Colonic mucosa (tissue), 4 donors: ENCODE measurements at regions of chr1 and their contacts with region 1.

Region 1: DNA sequence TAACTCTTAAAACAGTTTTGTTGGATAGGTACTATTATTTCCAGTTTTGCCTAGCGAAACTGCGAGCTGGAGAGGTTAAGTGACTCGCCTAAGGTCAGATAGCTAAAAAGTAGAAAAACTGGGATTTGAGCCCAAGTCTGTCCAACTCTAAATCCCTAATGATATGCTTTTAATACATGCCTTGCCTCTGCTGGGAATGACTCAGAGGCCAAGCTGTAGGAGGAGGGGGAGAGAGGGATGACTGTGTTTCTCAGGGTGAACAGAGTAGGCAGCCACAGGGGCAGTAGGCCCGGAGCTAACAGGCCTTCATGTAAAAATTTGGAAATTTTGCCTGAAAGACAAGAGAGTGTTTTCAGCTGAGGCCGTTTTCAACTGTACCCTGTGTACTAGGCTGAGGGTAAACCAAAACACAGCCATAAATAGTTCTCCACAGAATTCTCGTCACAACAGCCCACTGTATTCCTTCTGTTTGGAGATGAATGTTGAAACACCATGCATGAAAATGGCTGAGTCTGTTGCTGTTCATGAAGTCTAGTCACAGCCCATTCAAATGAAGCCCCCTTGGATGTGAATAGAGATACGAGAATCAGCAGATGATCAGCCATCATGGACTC is 107.5 kb upstream of the HOOK1 start:
- DNase-seq: no peak
- H3K4me3 ChIP-seq: no peak overlapping the region
- H3K27ac ChIP-seq: peak overlapping the region; percentile 19
- H3K4me1 ChIP-seq: no peaks in the 10 kb centered on the region
- H3K27me3 ChIP-seq: no peaks in the 10 kb centered on the region
- CTCF ChIP-seq: no peak

Region 2: GRCh38 chr1:58773406-58773840 is 933.9 kb before region 1 on chr1:
- intact Hi-C with region 1: loop called (anchors 10 kb)
- DNase-seq: peak; percentile 42
- H3K4me3 ChIP-seq: no peak overlapping the region
- H3K27ac ChIP-seq: no peak overlapping the region
- H3K4me1 ChIP-seq: no peaks in the 10 kb centered on the region
- H3K27me3 ChIP-seq: no peaks in the 10 kb centered on the region
- CTCF ChIP-seq: no peak

Region 3: DNA sequence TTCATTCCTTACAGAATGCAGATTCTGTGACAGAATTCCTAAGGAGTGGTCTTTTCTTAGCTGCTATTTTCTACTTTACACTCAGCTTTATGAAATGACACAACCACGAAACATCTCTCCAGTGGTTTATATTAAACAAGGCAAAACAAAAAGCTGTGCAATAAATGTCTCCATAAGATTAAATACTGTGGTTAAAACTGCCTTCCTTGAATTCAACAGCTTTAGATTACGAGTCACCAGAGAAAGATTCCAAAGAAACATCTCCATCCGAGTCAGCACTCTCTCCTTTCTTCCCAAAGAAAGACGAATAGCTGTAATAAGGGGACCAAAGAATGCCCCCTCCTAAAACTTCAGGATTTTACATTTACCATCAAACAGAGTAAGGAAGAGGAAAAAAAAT is 370.9 kb after region 1 on chr1:
- intact Hi-C with region 1: no loop called
- DNase-seq: no peak
- H3K4me3 ChIP-seq: no peak overlapping the region
- H3K27ac ChIP-seq: no peak overlapping the region
- H3K4me1 ChIP-seq: no peaks in the 10 kb centered on the region
- H3K27me3 ChIP-seq: no peaks in the 10 kb centered on the region
- CTCF ChIP-seq: no peak